ENCODE measurements at regions of chr9 and their contacts with region 1.

Region 1: DNA sequence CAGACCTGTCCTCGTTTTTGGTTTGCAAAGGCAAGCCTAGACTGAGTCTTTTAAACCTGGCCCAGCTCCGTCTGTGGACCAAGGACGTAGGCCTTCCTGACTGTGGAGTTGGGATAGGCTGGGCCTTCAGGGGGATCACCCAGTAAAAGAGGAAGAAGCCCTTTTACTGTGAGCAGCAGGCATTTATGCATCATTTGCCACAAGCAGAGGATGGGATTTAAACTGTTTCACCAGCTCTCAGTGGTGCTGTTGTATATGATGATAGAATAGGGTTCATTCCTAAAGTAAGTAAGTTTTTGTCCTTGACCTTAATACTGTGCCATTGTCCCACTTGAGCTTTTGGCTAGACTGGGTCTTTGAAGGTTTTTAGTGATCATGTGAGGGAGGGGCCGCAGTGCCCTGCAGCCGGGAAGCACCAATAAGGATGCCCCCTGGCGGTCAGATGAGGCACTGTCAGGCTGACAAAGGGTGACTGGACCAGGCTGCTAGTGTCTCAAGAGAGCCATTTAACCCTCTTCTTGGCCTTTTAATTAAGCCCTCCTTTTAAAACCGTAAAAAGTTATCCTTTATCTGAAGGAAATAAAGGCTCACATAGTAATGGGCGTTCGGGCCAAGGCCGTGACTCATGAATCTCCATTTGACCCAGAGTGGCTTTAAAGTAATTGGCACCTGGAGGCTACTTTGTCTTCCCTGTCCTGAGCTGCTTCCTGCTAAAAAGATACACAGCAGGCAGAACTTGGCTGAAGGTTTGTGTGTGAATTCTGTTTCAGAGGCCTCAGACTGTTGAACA is 74.0 kb downstream of the UBAP1 start:
- DNase-seq: peak; percentile 18
- ATAC-seq: peak; percentile 82
- H3K4me3 ChIP-seq: no peak overlapping the region
- H3K27ac ChIP-seq: no peak overlapping the region
- H3K4me1 ChIP-seq: peaks cover 0 to 26% of the 10 kb centered on the region in 2 experiments; a peak in 2 of 4 replicates
- H3K27me3 ChIP-seq: no peaks in the 10 kb centered on the region
- CTCF ChIP-seq: peak; percentile 37 to 97 (median 96); a peak in 5 of 6 replicates
- POLR2A ChIP-seq: no peak
- RAD21 ChIP-seq: peak; percentile 68

Region 2: DNA sequence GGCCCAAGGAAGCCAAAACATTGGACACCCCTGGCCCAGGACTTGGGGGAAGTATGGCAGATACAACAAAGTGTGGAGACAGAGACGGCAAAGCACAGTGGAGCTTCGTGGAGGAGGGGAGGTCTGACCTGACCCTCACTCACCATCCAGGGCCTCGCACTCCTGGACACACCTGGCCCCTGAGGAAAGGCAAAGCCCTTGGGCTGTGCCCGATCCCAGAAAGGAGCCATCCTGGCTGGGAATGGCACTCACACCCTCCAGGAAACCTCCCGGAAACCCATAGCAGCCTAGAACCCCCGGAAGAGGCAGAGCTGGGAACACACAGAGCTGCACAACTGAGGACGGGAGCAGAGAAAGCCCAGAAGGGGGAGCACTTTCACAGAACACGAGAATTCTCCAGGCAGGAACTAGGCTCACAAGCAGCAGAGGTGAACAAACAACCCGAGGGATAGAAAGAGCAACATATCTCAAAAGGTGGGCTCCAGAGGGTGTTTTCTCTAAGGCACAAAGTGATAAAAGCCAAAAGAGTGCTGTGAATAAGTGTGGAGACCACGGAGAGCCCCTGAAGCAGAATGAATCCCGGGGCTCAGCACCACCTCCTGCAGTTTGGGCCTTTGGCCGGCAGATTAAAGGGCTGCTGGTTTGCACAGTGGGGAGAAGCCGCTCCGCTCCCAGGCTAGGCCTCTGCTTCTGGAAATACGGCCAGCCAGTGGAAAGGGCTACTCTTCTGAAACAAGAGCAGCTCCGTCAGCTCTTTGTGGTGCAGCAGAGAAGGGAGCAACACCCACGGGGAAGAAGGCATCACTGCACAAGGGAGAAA is 327.7 kb before region 1 on chr9:
- CTCF ChIA-PET with region 1: interaction called, 14 read pairs
- POLR2A ChIA-PET with region 1: no interaction called
- RAD21 ChIA-PET with region 1: no interaction called
- intact Hi-C with region 1: no loop called
- DNase-seq: peak; percentile 16
- ATAC-seq: peak; percentile 69
- H3K4me3 ChIP-seq: no peak overlapping the region
- H3K27ac ChIP-seq: peak overlapping the region; percentile 2; the same call in 1 of the 2 replicates
- H3K4me1 ChIP-seq: no peaks in the 10 kb centered on the region
- H3K27me3 ChIP-seq: no peaks in the 10 kb centered on the region
- CTCF ChIP-seq: peak; percentile 60 to 81 (median 74); a peak in 5 of 6 replicates
- POLR2A ChIP-seq: no peak
- RAD21 ChIP-seq: peak; percentile 67

Region 3: GRCh38 chr9:34010979-34011378 is 241.9 kb before region 1 on chr9:
- CTCF ChIA-PET with region 1: interaction called, 4 read pairs
- POLR2A ChIA-PET with region 1: no interaction called
- RAD21 ChIA-PET with region 1: no interaction called
- intact Hi-C with region 1: loop called (anchors 2 kb)
- DNase-seq: peak; percentile 8
- ATAC-seq: no peak
- H3K4me3 ChIP-seq: no peak overlapping the region
- H3K27ac ChIP-seq: no peak overlapping the region
- H3K4me1 ChIP-seq: no peaks in the 10 kb centered on the region
- H3K27me3 ChIP-seq: no peaks in the 10 kb centered on the region
- CTCF ChIP-seq: peak in 2 of 3 experiments; percentile 24 to 54; a peak in 3 of 6 replicates
- POLR2A ChIP-seq: no peak
- RAD21 ChIP-seq: peak; percentile 48; the same call in 1 of the 2 replicates

Region 4: DNA sequence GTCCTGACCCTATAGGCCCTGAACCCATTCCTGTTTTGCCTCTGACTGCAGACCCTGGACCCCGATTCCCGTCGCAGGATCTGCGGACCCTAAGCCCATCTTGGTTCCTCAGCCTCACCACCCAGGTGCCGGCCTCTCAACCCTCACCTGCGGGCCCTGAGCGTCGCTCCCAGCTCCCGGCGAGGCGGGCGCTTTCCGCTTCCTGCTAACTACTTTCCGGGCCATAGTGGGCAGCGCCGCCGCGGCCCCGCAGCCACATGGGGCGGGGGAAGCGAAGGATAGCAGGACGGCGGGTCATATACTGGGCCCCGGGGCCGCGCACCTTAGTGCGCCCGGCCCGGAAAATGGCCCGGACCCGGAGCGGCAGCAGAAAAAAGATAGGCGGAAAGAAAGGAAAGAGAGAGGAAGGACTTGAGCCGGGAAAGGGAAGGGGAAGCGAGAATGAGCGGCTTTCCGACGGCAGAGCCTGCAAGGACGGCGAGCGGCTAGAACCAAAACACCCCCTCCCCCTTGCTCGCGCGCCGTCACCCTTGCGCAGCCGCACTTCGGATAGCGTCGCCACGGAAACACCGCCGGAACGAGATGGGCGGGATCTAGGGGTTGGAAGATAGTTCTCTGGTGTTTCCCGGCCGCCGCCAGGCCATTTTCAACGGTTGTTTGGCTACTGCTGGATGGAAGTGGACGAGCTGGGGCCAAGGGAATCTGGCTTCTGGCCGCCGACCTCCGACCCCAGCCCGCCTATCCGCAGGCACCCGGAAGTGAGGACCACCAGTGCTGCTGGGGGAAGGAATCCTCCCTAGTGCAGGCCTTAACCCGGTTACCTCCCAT is 126.4 kb before region 1 on chr9 and contains the start of gene DCAF12:
- CTCF ChIA-PET with region 1: interaction called, 4 read pairs
- POLR2A ChIA-PET with region 1: no interaction called
- RAD21 ChIA-PET with region 1: interaction called in 1 of 2 experiments, 3 read pairs
- intact Hi-C with region 1: loop called (anchors 5 kb)
- DNase-seq: peak; percentile 78
- ATAC-seq: peak; percentile 93
- H3K4me3 ChIP-seq: peak within 1 kb of the TSS; percentile 63 to 85
- H3K27ac ChIP-seq: peak within 1 kb of the TSS; percentile 86
- H3K4me1 ChIP-seq: peaks cover 10 to 12% of the 10 kb centered on the region in 2 experiments
- H3K27me3 ChIP-seq: no peaks in the 10 kb centered on the region
- CTCF ChIP-seq: no peak
- POLR2A ChIP-seq: peak; percentile 14
- RAD21 ChIP-seq: no peak; the same call in 1 of the 2 replicates
- total RNA-seq, gene DCAF12: 40.2 TPM

Region 5: DNA sequence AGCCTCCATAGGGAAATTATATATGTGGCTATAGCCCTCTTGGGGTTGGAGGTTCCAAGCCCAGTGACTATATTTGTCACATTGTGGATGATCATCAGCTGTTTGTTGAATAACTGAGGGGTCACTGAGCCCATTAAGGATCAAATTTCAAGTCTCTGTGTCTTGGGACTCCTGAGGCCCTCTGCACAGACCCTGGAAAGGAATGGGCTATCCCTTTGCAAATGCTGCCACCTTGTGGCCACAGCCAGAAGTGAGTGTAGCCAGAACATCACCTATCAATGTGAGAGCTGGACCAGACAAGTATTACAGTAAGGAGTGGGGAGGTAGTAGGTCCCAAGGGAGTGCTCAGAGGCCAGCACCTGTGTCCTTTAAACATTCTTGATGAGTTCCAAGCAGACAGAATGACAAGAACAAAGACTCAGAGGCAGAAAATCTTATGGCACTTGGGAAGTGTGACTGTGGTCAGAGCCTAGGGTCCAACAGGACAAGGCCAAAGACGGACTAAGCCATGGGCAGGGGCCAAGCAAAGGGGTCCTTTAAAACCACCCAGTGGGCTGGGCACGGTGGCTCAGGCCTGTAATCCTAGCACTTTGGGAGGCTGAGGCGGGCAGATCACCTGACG is 350.9 kb after region 1 on chr9:
- CTCF ChIA-PET with region 1: interaction called, 3 read pairs
- POLR2A ChIA-PET with region 1: no interaction called
- RAD21 ChIA-PET with region 1: no interaction called
- intact Hi-C with region 1: loop called (anchors 10 kb)
- DNase-seq: peak; percentile 42
- ATAC-seq: peak; percentile 98
- H3K4me3 ChIP-seq: no peak overlapping the region
- H3K27ac ChIP-seq: no peak overlapping the region
- H3K4me1 ChIP-seq: peaks cover 0 to 10% of the 10 kb centered on the region in 2 experiments; a peak in 1 of 4 replicates
- H3K27me3 ChIP-seq: no peaks in the 10 kb centered on the region
- CTCF ChIP-seq: peak; percentile 84 to 99 (median 91); a peak in 5 of 6 replicates
- POLR2A ChIP-seq: no peak
- RAD21 ChIP-seq: peak; percentile 94

Measured in HCT116 (cell line).